Activated CD4-positive, alpha-beta memory T cell treated with anti-CD3 and anti-CD28 coated beads for 36 hours (primary cell): ENCODE measurements at regions of chr17 and their contacts with region 1.

Region 1: DNA sequence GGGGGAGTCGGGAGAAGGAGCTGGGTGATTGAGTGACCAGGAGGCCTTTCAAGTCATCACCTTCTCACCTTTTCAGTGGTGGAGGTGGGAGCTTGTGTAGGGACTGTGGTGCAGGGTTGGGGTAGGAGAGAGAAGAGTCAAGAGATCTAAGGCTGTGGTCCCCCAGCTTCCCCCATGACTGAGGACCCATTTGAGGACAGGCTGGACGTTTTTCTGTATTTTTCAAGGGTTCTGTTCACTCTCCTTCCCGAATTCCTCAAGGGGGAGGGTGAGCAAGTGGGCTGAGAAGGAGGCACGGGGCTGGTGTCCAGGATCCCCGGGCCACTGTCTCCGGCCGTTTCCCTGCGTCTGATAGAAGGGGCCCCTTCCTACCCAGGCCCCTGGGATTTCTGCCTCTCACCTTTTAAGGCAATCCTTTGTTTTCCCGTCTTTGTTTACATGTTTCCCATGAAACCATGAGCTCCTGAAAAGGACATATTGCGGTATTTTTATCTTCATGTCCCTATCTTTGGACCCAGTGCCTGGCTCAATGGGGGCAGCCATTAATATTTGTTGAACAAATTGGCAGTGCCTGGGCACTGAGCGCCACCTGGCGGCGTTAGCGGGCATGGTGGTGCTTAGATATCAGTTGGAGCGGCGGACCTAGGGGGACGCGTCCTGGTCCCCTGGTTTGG is 9.2 kb upstream of the CD300A start:
- DNase-seq: peak; percentile 80
- H3K4me3 Mint-ChIP-seq: no peak overlapping the region
- H3K27ac Mint-ChIP-seq: no peak overlapping the region
- H3K4me1 Mint-ChIP-seq: peaks cover 23% of the 10 kb centered on the region
- H3K27me3 Mint-ChIP-seq: peaks cover 3% of the 10 kb centered on the region

Region 2: GRCh38 chr17:74070374-74070773 is 386.9 kb before region 1 on chr17:
- CTCF ChIA-PET with region 1: no interaction called
- POLR2A ChIA-PET with region 1: no interaction called
- intact Hi-C with region 1: no loop called
- DNase-seq: no peak
- H3K4me3 Mint-ChIP-seq: no peak overlapping the region
- H3K27ac Mint-ChIP-seq: no peak overlapping the region
- H3K4me1 Mint-ChIP-seq: no peaks in the 10 kb centered on the region
- H3K27me3 Mint-ChIP-seq: peaks cover 8% of the 10 kb centered on the region

Region 3: GRCh38 chr17:74379495-74380085 is 77.7 kb before region 1 on chr17:
- CTCF ChIA-PET with region 1: no interaction called
- POLR2A ChIA-PET with region 1: no interaction called
- intact Hi-C with region 1: loop called (anchors 1 kb)
- DNase-seq: peak; percentile 94
- H3K4me3 Mint-ChIP-seq: no peak overlapping the region
- H3K27ac Mint-ChIP-seq: no peak overlapping the region
- H3K4me1 Mint-ChIP-seq: no peaks in the 10 kb centered on the region
- H3K27me3 Mint-ChIP-seq: peaks cover 1% of the 10 kb centered on the region

Region 4: GRCh38 chr17:74417178-74418045 is 39.9 kb before region 1 on chr17:
- CTCF ChIA-PET with region 1: interaction called, 16 read pairs
- POLR2A ChIA-PET with region 1: no interaction called
- intact Hi-C with region 1: no loop called
- DNase-seq: peak; percentile 29
- H3K4me3 Mint-ChIP-seq: no peak overlapping the region
- H3K27ac Mint-ChIP-seq: no peak overlapping the region
- H3K4me1 Mint-ChIP-seq: peaks cover 5% of the 10 kb centered on the region
- H3K27me3 Mint-ChIP-seq: peaks cover 10% of the 10 kb centered on the region

Region 5: GRCh38 chr17:74442670-74443515 is 14.4 kb before region 1 on chr17:
- CTCF ChIA-PET with region 1: interaction called, 39 read pairs
- POLR2A ChIA-PET with region 1: no interaction called
- intact Hi-C with region 1: no loop called
- DNase-seq: no peak
- H3K4me3 Mint-ChIP-seq: no peak overlapping the region
- H3K27ac Mint-ChIP-seq: no peak overlapping the region
- H3K4me1 Mint-ChIP-seq: no peaks in the 10 kb centered on the region
- H3K27me3 Mint-ChIP-seq: peaks cover 4% of the 10 kb centered on the region

Region 6: DNA sequence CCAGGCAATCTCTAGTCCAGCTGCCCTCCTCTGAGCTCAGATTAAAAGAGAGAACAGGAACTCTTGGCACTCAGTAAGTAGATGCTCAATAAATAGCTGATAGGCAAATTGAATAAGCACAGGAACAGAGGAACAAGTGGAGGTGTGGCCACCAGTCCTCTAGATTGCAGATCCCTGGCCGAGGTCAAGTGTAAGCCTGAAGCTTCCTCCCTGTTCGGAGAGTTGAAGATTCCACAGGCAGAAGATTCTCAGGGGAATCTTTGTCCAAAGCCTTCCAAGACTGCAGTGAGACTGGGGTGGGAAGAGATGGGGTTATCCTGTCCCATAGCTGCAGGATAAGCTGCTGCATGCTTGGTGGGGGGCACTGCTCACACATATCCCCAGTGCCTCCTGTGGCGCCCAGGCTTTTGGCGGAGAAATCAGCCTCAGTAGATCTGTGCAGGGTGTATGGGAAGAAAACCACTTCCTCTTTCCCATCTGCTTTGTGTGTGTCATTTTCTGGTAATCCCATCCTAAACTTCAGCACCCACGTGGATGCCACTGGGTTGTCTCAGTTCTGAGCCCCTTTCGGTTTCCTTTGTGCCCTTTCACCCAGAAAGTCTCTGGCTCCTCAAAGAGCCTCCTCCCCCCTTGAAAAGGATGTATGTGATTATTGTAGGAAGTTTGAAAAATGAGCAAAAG is 21.3 kb after region 1 on chr17:
- CTCF ChIA-PET with region 1: interaction called, 55 read pairs
- POLR2A ChIA-PET with region 1: no interaction called
- intact Hi-C with region 1: no loop called
- DNase-seq: peak; percentile 47
- H3K4me3 Mint-ChIP-seq: peak overlapping the region; percentile 18
- H3K27ac Mint-ChIP-seq: peak overlapping the region; percentile 72
- H3K4me1 Mint-ChIP-seq: peaks cover 46% of the 10 kb centered on the region
- H3K27me3 Mint-ChIP-seq: no peaks in the 10 kb centered on the region

Region 7: DNA sequence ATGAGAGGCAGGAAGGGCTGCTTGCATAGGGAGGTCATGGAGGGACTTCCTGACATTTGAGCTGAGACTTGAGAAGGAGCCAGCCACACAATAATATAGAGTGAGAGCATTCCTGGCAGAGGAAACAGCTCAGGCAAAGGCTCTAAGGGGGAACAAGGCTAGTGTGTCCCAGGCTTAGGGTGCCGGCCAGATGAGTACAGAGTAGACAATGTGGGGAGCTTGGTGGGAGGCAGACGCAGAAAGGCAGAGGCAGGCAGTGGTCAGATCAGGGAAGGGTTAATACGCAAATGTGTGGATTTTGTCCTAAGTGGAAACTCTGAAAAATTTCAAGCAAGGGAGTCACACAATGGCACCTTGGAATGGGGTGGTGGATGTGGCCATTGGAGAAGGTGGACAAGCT is 42.7 kb after region 1 on chr17:
- CTCF ChIA-PET with region 1: interaction called, 28 read pairs
- POLR2A ChIA-PET with region 1: no interaction called
- intact Hi-C with region 1: no loop called
- DNase-seq: no peak
- H3K4me3 Mint-ChIP-seq: no peak overlapping the region
- H3K27ac Mint-ChIP-seq: no peak overlapping the region
- H3K4me1 Mint-ChIP-seq: no peaks in the 10 kb centered on the region
- H3K27me3 Mint-ChIP-seq: peaks cover 2% of the 10 kb centered on the region